ENCODE measurements at regions of chr18 and their contacts with region 1.

Region 1: GRCh38 chr18:8858888-8859511 is 153.6 kb downstream of the MTCL1 start:
- DNase-seq: no peak
- ATAC-seq: no peak
- H3K4me3 ChIP-seq: no peak overlapping the region
- H3K27ac ChIP-seq: no peak overlapping the region
- H3K4me1 ChIP-seq: no peaks in the 10 kb centered on the region
- H3K27me3 ChIP-seq: no peaks in the 10 kb centered on the region
- CTCF ChIP-seq: no peak
- EP300 ChIP-seq: no peak
- POLR2A ChIP-seq: no peak
- RAD21 ChIP-seq: no peak

Region 2: GRCh38 chr18:8874872-8875271 is 15.9 kb after region 1 on chr18:
- CTCF ChIA-PET with region 1: no interaction called
- POLR2A ChIA-PET with region 1: no interaction called
- RAD21 ChIA-PET with region 1: no interaction called
- SMC1A ChIA-PET with region 1: no interaction called
- in situ Hi-C with region 1: no loop called
- intact Hi-C with region 1: no loop called
- DNase-seq: no peak
- ATAC-seq: no peak
- H3K4me3 ChIP-seq: no peak overlapping the region
- H3K27ac ChIP-seq: no peak overlapping the region
- H3K4me1 ChIP-seq: no peaks in the 10 kb centered on the region
- H3K27me3 ChIP-seq: no peaks in the 10 kb centered on the region; a peak in 2 of 4 replicates
- CTCF ChIP-seq: no peak
- EP300 ChIP-seq: no peak
- POLR2A ChIP-seq: no peak
- RAD21 ChIP-seq: no peak

Region 3: DNA sequence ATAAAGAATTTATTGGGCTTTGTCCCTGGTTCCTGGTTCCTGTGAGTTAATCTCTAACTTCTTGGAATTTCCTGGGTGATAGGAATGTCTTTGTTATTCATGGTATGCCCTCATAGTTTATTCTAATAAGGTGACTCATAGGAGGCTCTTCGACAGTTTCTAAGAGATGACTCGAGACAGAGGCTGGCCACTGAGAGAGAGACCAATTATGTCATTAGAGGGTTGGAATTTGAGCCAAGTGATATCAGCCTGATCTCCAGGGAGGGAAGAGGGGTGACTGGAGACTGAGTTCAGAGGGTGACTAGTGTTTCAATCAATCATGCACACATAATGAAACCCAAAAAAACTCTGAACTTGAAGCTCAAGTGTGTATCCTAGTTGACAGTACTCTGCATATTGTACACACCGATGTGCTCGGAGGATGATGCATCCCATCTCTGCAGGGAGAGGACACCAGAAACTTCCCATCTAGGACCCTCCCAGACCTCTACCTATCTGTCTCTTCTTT is 32.0 kb after region 1 on chr18:
- CTCF ChIA-PET with region 1: no interaction called
- POLR2A ChIA-PET with region 1: no interaction called
- RAD21 ChIA-PET with region 1: no interaction called
- SMC1A ChIA-PET with region 1: no interaction called
- in situ Hi-C with region 1: loop called (anchors 5 kb)
- intact Hi-C with region 1: no loop called
- DNase-seq: no peak
- ATAC-seq: no peak
- H3K4me3 ChIP-seq: no peak overlapping the region
- H3K27ac ChIP-seq: no peak overlapping the region
- H3K4me1 ChIP-seq: no peaks in the 10 kb centered on the region
- H3K27me3 ChIP-seq: no peaks in the 10 kb centered on the region
- CTCF ChIP-seq: no peak
- EP300 ChIP-seq: no peak
- POLR2A ChIP-seq: no peak
- RAD21 ChIP-seq: no peak